ENCODE measurements at regions of chr11 and their contacts with region 1.

Region 1: GRCh38 chr11:8688414-8689362 is 6.1 kb downstream of the RPL27A start:
- DNase-seq: peak; percentile 90
- H3K4me3 ChIP-seq: peak overlapping the region; percentile 69
- H3K27ac ChIP-seq: peak overlapping the region; percentile 73
- H3K4me1 ChIP-seq: peaks cover 45% of the 10 kb centered on the region
- H3K27me3 ChIP-seq: no peaks in the 10 kb centered on the region
- CTCF ChIP-seq: peak; percentile 24; the same call in 1 of the 2 replicates

Region 2: DNA sequence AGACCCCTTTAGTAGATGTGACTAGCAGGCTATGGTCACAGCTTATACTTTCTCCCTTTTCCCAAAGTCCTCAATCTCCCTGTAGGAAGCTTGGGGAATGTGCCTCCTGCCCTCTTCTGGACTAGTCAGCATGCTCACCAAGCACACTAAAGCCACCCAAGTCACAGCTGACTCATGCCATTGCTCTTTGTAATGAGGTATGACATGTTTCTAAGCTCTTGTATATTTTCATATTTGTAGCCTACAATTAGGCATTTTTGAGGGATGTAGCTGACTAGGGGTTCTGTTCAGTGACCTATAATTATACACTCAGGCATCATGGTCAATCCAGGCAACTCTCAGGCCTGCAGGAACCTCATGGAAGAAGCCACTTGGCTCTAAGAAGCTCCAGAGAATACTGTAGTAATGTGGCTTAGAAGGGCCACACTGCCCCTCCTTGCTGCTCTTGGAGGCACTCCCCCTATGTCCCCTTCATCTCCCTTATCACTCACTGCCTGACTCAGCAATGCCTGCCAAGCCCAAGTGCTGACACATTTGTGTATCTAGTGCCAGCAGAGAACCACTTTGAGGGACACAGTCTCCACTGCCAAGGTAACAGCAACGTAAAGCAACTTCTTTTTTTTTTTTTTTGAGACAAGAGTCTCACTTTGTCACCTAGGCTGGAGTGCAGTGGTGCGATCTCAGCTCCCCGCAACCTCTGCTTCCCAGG is 80.1 kb after region 1 on chr11:
- CTCF ChIA-PET with region 1: no interaction called
- POLR2A ChIA-PET with region 1: no interaction called
- intact Hi-C with region 1: loop called (anchors 1 kb)
- DNase-seq: peak; percentile 15 to 61
- H3K4me3 ChIP-seq: no peak overlapping the region
- H3K27ac ChIP-seq: peak overlapping the region; percentile 66
- H3K4me1 ChIP-seq: peaks cover 30% of the 10 kb centered on the region
- H3K27me3 ChIP-seq: no peaks in the 10 kb centered on the region
- CTCF ChIP-seq: peak; percentile 28; the same call in 1 of the 2 replicates

Region 3: DNA sequence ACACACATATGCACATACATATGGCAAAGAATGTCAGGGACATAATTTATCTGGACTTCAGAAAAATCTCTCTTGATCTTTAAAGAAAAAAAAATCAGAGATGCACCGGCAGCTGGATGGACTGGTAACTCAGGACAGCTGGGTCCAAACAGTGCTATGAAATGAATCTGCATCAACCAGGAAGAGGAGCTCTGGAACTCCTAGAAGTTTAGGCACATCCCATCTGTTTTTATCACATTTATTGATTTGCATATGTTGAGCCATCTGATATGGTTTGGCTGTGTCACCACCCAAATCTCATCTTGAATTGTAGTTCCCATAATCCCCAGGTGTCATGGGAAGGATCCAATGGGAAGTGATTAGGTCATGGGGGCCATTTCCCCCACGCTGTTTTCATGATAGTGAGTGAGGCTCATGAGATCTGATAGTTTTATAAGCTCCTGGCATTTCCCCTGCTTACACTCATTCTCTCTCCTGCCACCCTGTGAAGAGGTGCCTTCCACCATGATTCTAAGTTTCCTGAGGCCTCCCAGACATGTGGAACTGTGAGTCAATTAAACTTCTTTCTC is 134.6 kb after region 1 on chr11:
- CTCF ChIA-PET with region 1: no interaction called
- POLR2A ChIA-PET with region 1: no interaction called
- intact Hi-C with region 1: no loop called
- DNase-seq: no peak
- H3K4me3 ChIP-seq: no peak overlapping the region
- H3K27ac ChIP-seq: no peak overlapping the region
- H3K4me1 ChIP-seq: no peaks in the 10 kb centered on the region
- H3K27me3 ChIP-seq: no peaks in the 10 kb centered on the region
- CTCF ChIP-seq: no peak

Region 4: DNA sequence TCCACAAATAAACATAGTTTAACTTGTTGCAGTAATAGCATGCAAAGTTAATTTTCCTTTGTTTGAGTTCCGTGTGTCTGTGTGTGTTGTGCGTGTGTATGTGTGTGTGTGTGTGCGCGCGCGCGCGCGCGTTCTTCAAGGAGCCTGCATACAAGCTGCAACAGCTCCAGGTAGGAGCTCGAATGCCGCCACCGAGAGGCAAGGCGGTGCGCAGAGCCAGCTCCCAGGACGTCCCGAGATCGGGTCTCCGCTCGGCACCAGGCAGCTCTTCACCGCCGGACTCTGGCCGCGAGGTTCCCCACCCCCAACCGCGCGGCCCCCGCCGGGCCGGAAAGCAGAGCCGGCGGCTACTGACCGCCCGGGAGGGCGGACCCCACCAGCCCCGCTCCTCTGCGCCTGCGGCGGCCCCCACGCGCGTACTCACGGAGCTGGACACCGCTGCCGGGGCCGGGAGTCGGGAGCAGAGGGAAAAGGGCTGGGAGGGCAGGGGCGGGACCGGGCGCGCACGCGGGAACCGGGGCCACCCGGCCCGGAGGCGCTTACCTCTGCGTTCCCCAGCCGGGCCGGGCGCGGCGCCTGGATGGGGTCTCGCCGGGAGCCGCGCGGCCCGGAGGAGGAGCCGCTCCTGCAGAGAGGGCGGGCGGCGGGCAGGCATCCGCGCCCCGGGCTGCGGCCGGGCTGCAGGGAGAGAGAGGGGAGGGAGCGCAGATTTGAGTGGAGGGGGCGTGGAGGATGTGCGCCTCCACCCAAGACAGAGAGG is 181.9 kb after region 1 on chr11:
- CTCF ChIA-PET with region 1: no interaction called
- POLR2A ChIA-PET with region 1: interaction called, 4 read pairs
- intact Hi-C with region 1: loop called (anchors 2 kb)
- DNase-seq: peak; percentile 41 to 53
- H3K4me3 ChIP-seq: peak overlapping the region; percentile 60
- H3K27ac ChIP-seq: no peak overlapping the region
- H3K4me1 ChIP-seq: peaks cover 45% of the 10 kb centered on the region
- H3K27me3 ChIP-seq: no peaks in the 10 kb centered on the region
- CTCF ChIP-seq: no peak

Region 5: GRCh38 chr11:8964324-8965320 is 275.9 kb after region 1 on chr11 and contains the start of gene TMEM9B:
- CTCF ChIA-PET with region 1: no interaction called
- POLR2A ChIA-PET with region 1: interaction called, 3 read pairs
- intact Hi-C with region 1: loop called (anchors 2 kb)
- DNase-seq: peak; percentile 67 to 78
- H3K4me3 ChIP-seq: peak within 1 kb of the TSS; percentile 59
- H3K27ac ChIP-seq: peak within 1 kb of the TSS; percentile 77
- H3K4me1 ChIP-seq: peaks cover 15% of the 10 kb centered on the region
- H3K27me3 ChIP-seq: no peaks in the 10 kb centered on the region
- CTCF ChIP-seq: no peak
- total RNA-seq, gene TMEM9B: 12.0 and 13.4 TPM in 2 replicates

Region 6: DNA sequence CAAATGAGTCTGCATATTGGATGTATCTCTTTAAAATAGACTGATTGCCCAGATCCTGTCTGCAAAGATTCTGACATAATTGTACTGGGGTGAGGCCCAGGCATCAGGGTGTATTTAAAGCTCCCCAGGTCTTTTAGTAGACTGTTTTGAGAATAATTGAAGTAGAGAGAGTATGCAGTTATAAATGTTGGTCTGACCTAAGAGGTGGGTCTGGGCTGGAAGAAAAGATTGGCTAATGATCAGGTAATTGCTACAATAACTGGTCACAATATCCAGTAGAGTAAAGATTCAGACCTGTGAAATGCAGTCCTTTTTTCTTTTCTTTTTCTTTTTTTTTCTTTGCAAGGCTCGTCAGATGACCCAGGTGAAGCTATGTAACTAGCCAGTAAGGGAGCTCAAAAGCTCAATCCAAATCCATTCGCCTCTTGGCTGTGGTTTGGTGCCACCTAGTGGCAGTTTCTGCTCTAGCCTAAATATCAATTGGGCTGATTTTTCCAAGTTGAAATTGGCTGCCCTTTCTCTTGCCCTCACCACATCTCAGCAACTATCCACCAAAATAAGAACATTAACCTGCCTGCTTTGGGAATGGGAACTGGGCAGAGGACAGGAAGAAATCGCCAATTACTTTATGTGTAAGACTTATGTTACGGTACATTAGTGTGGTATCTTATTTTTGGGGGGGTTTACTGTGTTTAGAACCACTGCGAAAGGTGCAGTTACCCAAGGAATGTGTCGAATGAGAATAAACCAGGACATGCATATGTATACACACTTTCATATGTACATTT is 818.0 kb after region 1 on chr11:
- CTCF ChIA-PET with region 1: no interaction called
- POLR2A ChIA-PET with region 1: interaction called, 10 read pairs
- intact Hi-C with region 1: no loop called
- DNase-seq: peak; percentile 49 to 62
- H3K4me3 ChIP-seq: no peak overlapping the region
- H3K27ac ChIP-seq: 0 out of 2 replicates have a peak overlapping the region, but pooled peaks have one; percentile 13
- H3K4me1 ChIP-seq: no peaks in the 10 kb centered on the region
- H3K27me3 ChIP-seq: no peaks in the 10 kb centered on the region
- CTCF ChIP-seq: peak; percentile 84

Measured in PC-9 (cell line).